GM12878 (cell line): ENCODE measurements at regions of chr2 and their contacts with region 1.

Region 1: DNA sequence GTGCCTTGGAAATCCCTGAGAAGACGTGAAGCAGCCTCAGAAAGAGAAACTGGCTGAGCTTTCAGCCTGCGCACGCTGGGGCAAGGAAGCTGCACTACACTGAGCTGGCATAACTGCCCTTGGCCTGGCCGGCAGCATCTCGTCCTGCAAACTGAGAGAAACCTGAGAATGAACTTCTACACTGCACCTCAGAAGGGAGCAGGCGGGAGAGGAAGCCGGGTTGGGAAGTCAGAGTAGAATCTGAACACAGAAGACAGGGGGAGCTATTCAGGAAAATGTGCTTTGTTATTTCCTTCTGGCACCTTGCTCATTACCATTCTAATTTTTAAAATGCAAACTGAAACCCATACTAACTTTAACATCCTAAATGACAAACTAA is 70.9 kb downstream of the ZEB2 start:
- DNase-seq: no peak
- ATAC-seq: peak; percentile 78
- H3K4me3 ChIP-seq: no peak overlapping the region
- H3K27ac ChIP-seq: no peak overlapping the region
- H3K4me1 ChIP-seq: no peaks in the 10 kb centered on the region; the same call in 1 of the 2 replicates
- H3K27me3 ChIP-seq: peaks cover 2 to 4% of the 10 kb centered on the region in 2 experiments; a peak in 1 of 4 replicates
- CTCF ChIP-seq: peak in 2 of 3 experiments; percentile 21 to 34; a peak in 3 of 6 replicates
- EP300 ChIP-seq: no peak
- POLR2A ChIP-seq: no peak
- RAD21 ChIP-seq: no peak

Region 2: GRCh38 chr2:144067506-144067905 is 381.5 kb before region 1 on chr2:
- CTCF ChIA-PET with region 1: no interaction called
- POLR2A ChIA-PET with region 1: no interaction called
- RAD21 ChIA-PET with region 1: no interaction called
- SMC1A ChIA-PET with region 1: no interaction called
- in situ Hi-C with region 1: no loop called
- intact Hi-C with region 1: no loop called
- DNase-seq: no peak
- ATAC-seq: no peak
- H3K4me3 ChIP-seq: no peak overlapping the region
- H3K27ac ChIP-seq: no peak overlapping the region
- H3K4me1 ChIP-seq: no peaks in the 10 kb centered on the region
- H3K27me3 ChIP-seq: no peaks in the 10 kb centered on the region
- CTCF ChIP-seq: no peak
- EP300 ChIP-seq: no peak
- POLR2A ChIP-seq: no peak
- RAD21 ChIP-seq: no peak

Region 3: DNA sequence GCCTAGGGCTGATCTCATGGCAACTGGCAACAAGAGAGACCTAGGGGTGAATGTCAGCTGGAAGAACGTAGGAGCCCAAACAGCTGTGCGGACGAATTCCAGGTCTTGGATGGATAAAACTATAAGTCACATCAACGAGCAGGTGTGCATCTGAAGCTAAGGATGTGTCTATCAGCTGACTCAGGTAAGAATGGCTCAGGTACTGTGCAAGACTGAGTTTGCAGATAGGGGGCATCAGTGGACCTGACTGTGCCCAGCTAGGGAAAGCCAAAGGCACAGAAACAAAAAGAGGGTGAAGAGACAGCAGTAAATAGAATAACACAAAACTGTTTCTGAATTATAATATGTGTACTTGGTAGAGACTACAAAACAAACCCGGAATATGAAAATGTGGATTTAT is 286.4 kb before region 1 on chr2:
- CTCF ChIA-PET with region 1: interaction called, 5 read pairs
- POLR2A ChIA-PET with region 1: no interaction called
- RAD21 ChIA-PET with region 1: no interaction called
- SMC1A ChIA-PET with region 1: interaction called, 6 read pairs
- in situ Hi-C with region 1: no loop called
- intact Hi-C with region 1: loop called (anchors 10 kb)
- DNase-seq: peak; percentile 12
- ATAC-seq: peak; percentile 95
- H3K4me3 ChIP-seq: no peak overlapping the region
- H3K27ac ChIP-seq: no peak overlapping the region
- H3K4me1 ChIP-seq: no peaks in the 10 kb centered on the region
- H3K27me3 ChIP-seq: no peaks in the 10 kb centered on the region
- CTCF ChIP-seq: peak; percentile 53 to 73 (median 69); a peak in 5 of 6 replicates
- EP300 ChIP-seq: no peak
- POLR2A ChIP-seq: no peak
- RAD21 ChIP-seq: peak; percentile 80

Region 4: DNA sequence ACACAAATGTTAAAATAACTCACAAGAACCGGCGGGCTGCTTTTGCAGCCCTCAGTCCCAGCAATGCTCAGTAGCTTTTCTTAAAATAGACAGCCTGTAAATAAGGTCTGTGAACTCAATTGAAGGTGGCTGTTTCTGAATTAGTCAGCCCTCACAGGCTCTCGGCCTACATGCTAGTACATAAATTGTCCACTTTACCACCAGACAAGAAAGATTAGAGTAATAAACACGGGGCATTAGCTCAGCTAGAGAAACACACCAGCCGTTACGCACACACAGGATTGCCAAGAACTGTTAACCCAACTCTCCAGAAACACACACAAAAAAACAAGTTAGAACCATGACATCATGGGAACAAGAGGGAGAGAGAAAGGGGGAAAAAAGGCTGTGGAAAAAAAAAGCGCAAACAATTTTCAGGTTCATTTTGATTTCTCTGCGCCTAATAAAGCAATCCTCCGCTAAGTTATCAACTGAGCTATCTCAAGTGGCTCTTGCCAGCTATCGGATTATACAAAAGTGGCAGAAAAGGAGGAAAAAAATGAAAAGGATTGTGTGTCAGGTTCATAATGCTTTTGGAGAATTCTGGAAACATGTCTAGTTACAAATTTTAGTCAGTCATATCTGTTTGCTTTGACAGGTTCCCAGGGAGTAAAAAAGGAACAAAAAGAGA is 18.2 kb before region 1 on chr2:
- CTCF ChIA-PET with region 1: interaction called, 32 read pairs
- POLR2A ChIA-PET with region 1: no interaction called
- RAD21 ChIA-PET with region 1: interaction called, 4 read pairs
- SMC1A ChIA-PET with region 1: interaction called, 6 read pairs
- in situ Hi-C with region 1: no loop called
- intact Hi-C with region 1: no loop called
- DNase-seq: peak; percentile 38
- ATAC-seq: peak; percentile 93
- H3K4me3 ChIP-seq: no peak overlapping the region
- H3K27ac ChIP-seq: no peak overlapping the region
- H3K4me1 ChIP-seq: no peaks in the 10 kb centered on the region
- H3K27me3 ChIP-seq: peaks cover 0 to 2% of the 10 kb centered on the region in 2 experiments; a peak in 3 of 4 replicates
- CTCF ChIP-seq: no peak
- EP300 ChIP-seq: peak in 1 of 2 experiments; percentile 28; a peak in 1 of 4 replicates
- POLR2A ChIP-seq: no peak
- RAD21 ChIP-seq: peak; percentile 1; the same call in 1 of the 2 replicates

Region 5: GRCh38 chr2:144438801-144439631 is 10.0 kb before region 1 on chr2:
- CTCF ChIA-PET with region 1: interaction called, 32 read pairs
- POLR2A ChIA-PET with region 1: no interaction called
- RAD21 ChIA-PET with region 1: interaction called, 3 read pairs
- SMC1A ChIA-PET with region 1: interaction called, 8 read pairs
- in situ Hi-C with region 1: no loop called
- intact Hi-C with region 1: no loop called
- DNase-seq: no peak
- ATAC-seq: no peak
- H3K4me3 ChIP-seq: no peak overlapping the region
- H3K27ac ChIP-seq: no peak overlapping the region
- H3K4me1 ChIP-seq: no peaks in the 10 kb centered on the region
- H3K27me3 ChIP-seq: peaks cover 0 to 2% of the 10 kb centered on the region in 2 experiments; a peak in 1 of 4 replicates
- CTCF ChIP-seq: no peak
- EP300 ChIP-seq: no peak
- POLR2A ChIP-seq: no peak
- RAD21 ChIP-seq: no peak

Region 6: DNA sequence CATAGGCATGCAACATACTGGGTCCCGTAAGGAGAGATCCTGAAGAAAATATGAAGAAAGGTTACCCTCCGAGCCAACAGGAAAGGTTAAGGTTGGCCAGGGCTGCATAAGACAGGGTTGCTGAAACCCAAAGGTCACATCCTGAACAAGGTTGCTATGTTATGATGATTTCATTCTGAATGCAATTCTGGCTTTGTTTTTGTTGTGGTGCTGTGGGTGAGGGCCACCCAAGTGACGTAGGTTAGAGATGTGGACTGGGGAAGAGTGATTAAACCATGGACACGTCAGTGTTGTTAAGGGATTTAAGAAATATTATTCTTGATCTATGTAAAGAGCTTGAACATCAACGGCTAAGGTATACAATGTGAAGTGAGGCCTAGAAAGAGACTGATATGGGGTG is 10.9 kb after region 1 on chr2:
- CTCF ChIA-PET with region 1: interaction called, 14 read pairs
- POLR2A ChIA-PET with region 1: no interaction called
- RAD21 ChIA-PET with region 1: no interaction called
- SMC1A ChIA-PET with region 1: interaction called, 9 read pairs
- in situ Hi-C with region 1: no loop called
- intact Hi-C with region 1: no loop called
- DNase-seq: no peak
- ATAC-seq: peak; percentile 46
- H3K4me3 ChIP-seq: no peak overlapping the region
- H3K27ac ChIP-seq: no peak overlapping the region
- H3K4me1 ChIP-seq: no peaks in the 10 kb centered on the region; the same call in 1 of the 2 replicates
- H3K27me3 ChIP-seq: peaks cover 0 to 2% of the 10 kb centered on the region in 2 experiments; a peak in 3 of 4 replicates
- CTCF ChIP-seq: no peak
- EP300 ChIP-seq: no peak
- POLR2A ChIP-seq: no peak
- RAD21 ChIP-seq: no peak

Region 7: DNA sequence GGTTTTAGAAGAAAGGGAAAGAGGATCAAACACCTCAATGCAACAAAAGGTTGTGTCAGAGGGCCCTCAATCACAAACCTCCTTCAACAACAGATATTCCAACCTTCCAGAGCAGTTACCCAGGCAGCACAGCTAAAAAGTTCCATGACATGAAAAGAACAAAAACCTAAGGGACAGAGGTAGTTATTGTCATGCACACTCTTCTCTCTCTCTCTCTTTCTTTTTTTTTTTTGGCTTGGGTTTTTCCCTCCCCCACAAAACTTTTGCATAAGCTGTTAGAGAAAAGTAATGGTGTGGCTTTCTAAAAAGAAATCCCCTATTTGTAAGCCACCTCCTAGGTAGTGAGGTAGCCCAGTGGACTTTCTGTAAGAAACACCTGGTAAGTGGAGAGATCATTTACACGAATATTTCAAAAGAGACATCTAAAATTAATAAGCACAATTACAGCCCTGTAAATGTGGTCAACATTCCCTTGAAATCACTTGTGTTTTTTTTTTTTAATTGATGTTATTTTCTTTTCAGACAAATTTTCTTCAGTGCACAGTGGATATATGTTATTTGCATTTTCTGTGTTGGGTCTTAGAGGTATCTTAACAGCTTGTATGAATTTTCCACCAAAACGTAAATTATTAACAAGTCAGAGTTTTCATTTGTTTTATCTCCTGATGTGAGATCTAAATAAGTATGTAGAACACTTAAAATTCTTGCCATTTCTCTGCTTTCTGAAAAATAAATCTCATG is 22.5 kb after region 1 on chr2:
- CTCF ChIA-PET with region 1: interaction called, 14 read pairs
- POLR2A ChIA-PET with region 1: no interaction called
- RAD21 ChIA-PET with region 1: interaction called, 3 read pairs
- SMC1A ChIA-PET with region 1: interaction called, 9 read pairs
- in situ Hi-C with region 1: no loop called
- intact Hi-C with region 1: no loop called
- DNase-seq: peak; percentile 19
- ATAC-seq: peak; percentile 82
- H3K4me3 ChIP-seq: no peak overlapping the region
- H3K27ac ChIP-seq: no peak overlapping the region
- H3K4me1 ChIP-seq: peaks cover 7% of the 10 kb centered on the region; the same call in 1 of the 2 replicates
- H3K27me3 ChIP-seq: peaks cover 0 to 2% of the 10 kb centered on the region in 2 experiments; a peak in 2 of 4 replicates
- CTCF ChIP-seq: no peak
- EP300 ChIP-seq: no peak
- POLR2A ChIP-seq: no peak
- RAD21 ChIP-seq: no peak